Heart right ventricle (tissue), 16 donors: ENCODE measurements at regions of chr9 and their contacts with region 1.

Region 1: DNA sequence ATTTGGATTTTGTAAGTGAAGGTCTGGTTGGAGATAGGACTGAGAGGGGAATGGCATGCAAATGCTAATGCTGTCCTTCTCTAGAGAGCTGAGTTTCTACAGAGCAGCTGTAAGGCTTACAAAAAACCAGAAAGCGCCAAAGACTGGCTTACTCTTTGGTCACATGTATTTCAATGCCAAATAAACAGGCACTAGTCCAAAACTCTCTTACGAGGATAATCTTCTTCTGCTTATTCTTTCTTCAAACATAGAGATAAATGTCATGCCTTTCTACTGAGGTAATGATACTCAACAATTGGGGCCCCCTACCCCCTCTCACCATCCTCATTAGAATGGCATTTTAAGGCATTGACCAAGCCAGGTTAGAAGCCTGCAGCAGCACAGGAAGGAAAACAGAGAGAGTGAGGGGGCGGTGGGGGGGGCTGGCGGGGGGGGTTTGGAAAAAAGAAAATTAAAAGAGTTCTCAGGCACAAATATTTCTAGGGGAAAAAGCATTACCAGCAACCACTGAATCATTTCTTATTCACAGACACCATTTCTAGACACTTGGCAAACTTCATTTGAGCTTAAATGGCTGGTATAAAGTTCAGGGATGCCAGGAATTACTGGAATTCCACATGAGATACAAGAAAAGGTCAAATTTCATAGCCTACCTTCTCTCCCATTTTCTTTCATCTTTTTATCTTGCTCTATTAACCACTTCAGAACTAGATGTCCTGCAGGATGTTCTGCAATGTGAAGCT is 34.0 kb downstream of the PUM3 start:
- DNase-seq: peak in 1 of 2 donors; percentile 23
- ATAC-seq: peak; percentile 65 to 90 (median 82)
- H3K4me3 ChIP-seq: peak overlapping the region in 1 of 10 donors; percentile 3
- H3K27ac ChIP-seq: peak overlapping the region in 8 of 10 donors; percentile 53 to 88 (median 70)
- H3K4me1 ChIP-seq: peaks cover 5 to 26% (median 19%) of the 10 kb centered on the region in 9 donors
- H3K27me3 ChIP-seq: no peaks in the 10 kb centered on the region
- CTCF ChIP-seq: no peak

Region 2: GRCh38 chr9:2638871-2639673 is 170.8 kb before region 1 on chr9:
- intact Hi-C with region 1: loop called in 1 of 10 experiments (anchors 10 kb)
- DNase-seq: no peak
- ATAC-seq: no peak
- H3K4me3 ChIP-seq: no peak overlapping the region
- H3K27ac ChIP-seq: peak overlapping the region in 1 of 10 donors; percentile 28
- H3K4me1 ChIP-seq: peaks cover 0 to 34% (median 22%) of the 10 kb centered on the region in 9 donors
- H3K27me3 ChIP-seq: no peaks in the 10 kb centered on the region
- CTCF ChIP-seq: no peak

Region 3: DNA sequence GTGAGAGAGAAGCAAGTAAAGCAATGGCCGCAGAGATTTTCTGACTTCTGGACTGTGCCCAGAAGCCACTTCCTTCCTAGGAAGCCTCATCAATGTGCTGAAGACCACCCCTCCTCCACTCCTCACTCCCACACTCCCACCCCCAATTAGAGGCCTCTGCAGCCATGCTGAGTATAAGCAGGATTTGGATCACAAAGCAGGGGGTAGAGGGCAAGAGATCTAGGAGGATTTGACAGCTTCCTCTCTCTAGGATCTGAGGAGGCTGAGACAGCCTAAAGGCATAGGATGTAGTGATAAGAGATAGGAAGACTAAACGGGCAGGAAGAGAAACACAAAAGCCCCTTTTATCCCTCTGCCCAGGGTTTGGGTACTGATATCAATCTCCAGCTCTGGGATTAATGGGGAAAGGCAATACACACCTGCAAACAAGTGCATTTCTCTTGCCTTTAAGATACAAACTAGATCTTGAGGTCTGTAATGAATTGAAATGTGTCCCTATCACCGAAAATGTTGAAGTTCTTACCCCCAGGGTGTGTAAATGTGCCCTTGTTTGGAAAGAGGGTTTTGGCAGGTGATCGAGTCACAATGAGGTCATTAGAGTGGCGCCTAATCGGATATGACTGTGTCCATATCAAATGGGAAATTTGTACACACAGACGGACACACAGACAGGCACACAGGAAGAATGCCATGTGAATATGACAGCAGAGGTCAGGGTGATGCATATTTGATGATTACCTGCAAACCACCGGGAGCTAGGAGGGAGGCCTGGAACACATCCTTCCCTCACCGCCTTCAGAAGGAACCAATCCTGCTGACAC is 64.1 kb before region 1 on chr9:
- intact Hi-C with region 1: loop called in 1 of 10 experiments (anchors 10 kb)
- DNase-seq: no peak
- ATAC-seq: no peak
- H3K4me3 ChIP-seq: no peak overlapping the region
- H3K27ac ChIP-seq: no peak overlapping the region
- H3K4me1 ChIP-seq: peaks cover 0 to 7% (median 0%) of the 10 kb centered on the region in 9 donors
- H3K27me3 ChIP-seq: no peaks in the 10 kb centered on the region
- CTCF ChIP-seq: no peak

Region 4: DNA sequence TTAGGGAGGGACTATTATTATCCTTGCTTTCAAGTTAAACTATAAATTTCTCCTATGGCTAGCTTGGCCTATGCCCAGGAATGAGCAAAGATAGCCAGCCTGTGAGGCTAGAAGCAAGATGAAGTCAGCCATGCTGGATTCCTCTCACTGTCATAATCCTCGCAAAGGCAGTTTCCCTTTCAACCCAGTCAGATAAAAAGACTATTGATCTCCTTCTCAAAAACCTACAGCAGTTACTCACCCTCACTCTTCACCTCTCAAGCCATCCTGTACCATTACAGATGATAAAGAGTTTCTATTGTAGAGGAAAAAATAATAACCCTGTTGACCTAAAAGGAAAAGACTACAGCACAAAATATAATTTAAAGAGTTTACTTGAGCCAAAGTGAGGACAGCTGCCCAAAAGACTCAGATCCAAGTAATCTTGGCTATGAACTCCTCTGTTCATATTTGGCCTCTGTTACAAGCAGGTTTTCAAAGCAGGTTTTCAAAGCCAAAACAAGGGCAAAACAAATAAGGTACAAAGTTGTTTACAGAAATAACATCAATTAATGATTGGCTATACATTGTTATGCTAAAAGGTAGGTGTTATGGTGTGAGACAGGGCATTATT is 50.9 kb before region 1 on chr9:
- intact Hi-C with region 1: no loop called
- DNase-seq: no peak
- ATAC-seq: no peak
- H3K4me3 ChIP-seq: no peak overlapping the region
- H3K27ac ChIP-seq: no peak overlapping the region
- H3K4me1 ChIP-seq: peaks cover 0 to 8% (median 0%) of the 10 kb centered on the region in 9 donors
- H3K27me3 ChIP-seq: no peaks in the 10 kb centered on the region
- CTCF ChIP-seq: no peak

Region 5: GRCh38 chr9:2966565-2967300 is 156.9 kb after region 1 on chr9:
- intact Hi-C with region 1: no loop called
- DNase-seq: no peak
- ATAC-seq: no peak
- H3K4me3 ChIP-seq: no peak overlapping the region
- H3K27ac ChIP-seq: no peak overlapping the region
- H3K4me1 ChIP-seq: no peaks in the 10 kb centered on the region
- H3K27me3 ChIP-seq: peaks cover 0 to 3% (median 0%) of the 10 kb centered on the region in 7 donors
- CTCF ChIP-seq: no peak